Dorsolateral prefrontal cortex (tissue), 120 donors: ENCODE measurements at regions of chr22 and their contacts with region 1.

Region 1: DNA sequence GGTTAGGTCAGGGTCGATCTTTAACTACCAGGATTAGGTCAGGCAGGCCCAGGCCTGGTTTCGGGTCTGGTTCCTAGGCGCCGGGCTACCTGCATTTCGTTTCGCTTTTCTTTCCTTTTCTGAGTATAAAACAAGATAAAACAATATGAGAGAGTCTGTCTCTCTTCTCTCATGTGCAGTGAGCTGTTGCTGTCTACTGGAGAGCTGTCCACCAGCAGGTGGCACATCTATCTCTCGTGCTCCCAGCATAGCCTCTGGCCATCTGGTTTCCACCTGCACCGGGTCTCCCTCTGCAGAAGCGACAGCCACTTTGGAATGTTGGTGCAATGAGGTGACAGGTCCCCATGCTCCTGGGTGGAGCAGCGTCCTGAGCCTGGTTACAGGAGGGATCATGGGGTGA is 27.6 kb downstream of the RIBC2 start:
- DNase-seq: peak in 7 of 10 donors; percentile 19 to 52 (median 42)
- H3K4me3 ChIP-seq: no peak overlapping the region
- H3K27ac ChIP-seq: no peak overlapping the region
- H3K27me3 ChIP-seq: no peaks in the 10 kb centered on the region
- CTCF ChIP-seq: peak in 55 of 56 donors; percentile 33 to 73 (median 53)

Region 2: GRCh38 chr22:45553351-45554039 is 112.4 kb after region 1 on chr22:
- intact Hi-C with region 1: loop called (anchors 5 kb)
- DNase-seq: peak; percentile 65 to 85 (median 73)
- H3K4me3 ChIP-seq: peak overlapping the region in 4 of 59 donors; percentile 2 to 16 (median 6)
- H3K27ac ChIP-seq: peak overlapping the region in 39 of 59 donors; percentile 6 to 84 (median 61)
- H3K27me3 ChIP-seq: peaks cover 0 to 5% (median 0%) of the 10 kb centered on the region in 45 donors
- CTCF ChIP-seq: peak; percentile 69 to 97 (median 92)